ENCODE measurements at regions of chr6 and their contacts with region 1.

Region 1: GRCh38 chr6:83514866-83515466 is 2.6 kb downstream of the PRSS35 start:
- DNase-seq: peak; percentile 59
- CTCF ChIP-seq: peak; percentile 66

Region 2: GRCh38 chr6:83221889-83222479 is 293.0 kb before region 1 on chr6:
- in situ Hi-C with region 1: loop called (anchors 5 kb)
- DNase-seq: peak; percentile 28
- CTCF ChIP-seq: peak; percentile 25